ENCODE measurements at regions of chr5 and their contacts with region 1.

Region 1: DNA sequence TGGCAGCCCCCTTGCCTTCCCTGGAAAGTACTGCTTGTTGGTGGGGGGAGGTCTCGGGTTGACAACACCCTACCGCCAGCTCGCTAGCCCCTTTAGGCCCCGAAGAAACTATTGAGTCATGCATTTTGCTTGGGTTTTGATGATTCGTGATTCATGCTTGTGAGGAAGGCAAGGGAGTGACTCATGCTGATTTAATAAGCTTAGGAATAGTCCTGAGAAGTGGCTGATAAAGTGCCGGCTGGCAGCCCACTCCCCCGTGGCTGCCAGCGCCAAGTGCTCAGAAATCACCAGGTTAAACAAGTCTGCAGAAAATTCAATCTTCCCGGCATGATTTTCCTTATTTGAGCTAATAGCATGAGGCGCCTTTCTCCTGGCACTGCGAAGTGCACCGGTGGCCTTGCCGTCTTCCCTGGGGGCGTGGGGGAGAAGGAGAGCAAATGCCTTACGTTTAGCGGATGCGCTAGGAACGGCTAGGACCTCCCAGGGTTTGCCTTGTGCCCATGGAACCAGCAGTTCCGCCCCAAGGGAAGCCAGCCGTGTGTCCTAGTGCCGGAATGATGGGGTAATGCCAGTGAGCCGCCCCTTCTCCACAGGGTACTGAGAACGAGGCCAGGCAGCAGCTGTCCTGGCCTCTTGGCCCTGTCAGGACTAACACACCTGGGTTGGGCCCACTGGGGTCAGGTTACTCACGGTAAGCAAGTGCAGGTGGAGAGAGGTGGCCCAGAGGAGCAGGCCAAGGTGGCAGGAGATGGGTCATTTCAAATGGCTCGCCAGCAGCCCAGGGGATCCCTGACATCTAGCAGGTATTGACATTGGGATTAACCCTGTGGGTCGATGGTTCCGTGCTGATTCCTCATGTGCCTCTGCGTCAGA is 151.9 kb downstream of the MACROH2A1 start:
- DNase-seq: peak in 1 of 2 donors; percentile 75
- H3K4me3 ChIP-seq: peak overlapping the region in 1 of 2 donors; percentile 26
- H3K27ac ChIP-seq: peak overlapping the region; percentile 80 to 91
- H3K4me1 ChIP-seq: peaks cover 29 to 41% of the 10 kb centered on the region in 2 donors
- H3K27me3 ChIP-seq: no peaks in the 10 kb centered on the region
- CTCF ChIP-seq: no peak

Region 2: DNA sequence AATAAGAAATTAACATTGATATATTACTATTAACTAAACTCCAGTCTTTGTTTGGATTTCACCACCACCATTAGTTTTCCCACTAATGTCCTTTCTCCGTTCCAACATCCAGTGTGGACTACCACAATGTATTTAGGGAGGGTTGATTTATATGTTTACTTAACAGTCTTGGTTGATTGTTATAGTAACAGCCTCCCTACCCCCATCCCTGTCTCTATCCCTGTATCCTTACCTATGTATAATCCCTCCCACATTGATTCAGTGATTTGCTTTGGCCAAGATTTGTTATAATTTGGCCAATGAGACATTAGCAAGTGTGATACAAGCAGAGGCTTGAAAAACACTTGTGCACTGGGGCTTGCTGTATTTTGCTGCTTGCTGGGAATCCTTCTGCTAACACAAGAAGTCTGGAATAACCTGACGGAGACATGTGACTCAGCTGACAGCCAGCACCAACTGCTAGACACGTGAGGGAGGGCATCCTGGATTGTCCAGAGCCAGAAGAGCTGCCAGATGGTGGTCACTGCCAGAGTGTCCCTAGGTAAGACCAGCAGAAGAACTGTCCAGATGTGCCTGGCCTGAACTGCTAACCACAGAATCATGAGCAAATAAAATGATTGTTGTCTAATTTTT is 1183.9 kb before region 1 on chr5:
- intact Hi-C with region 1: no loop called
- DNase-seq: no peak
- H3K4me3 ChIP-seq: no peak overlapping the region
- H3K27ac ChIP-seq: no peak overlapping the region
- H3K4me1 ChIP-seq: peaks cover 3 to 12% of the 10 kb centered on the region in 2 donors
- H3K27me3 ChIP-seq: no peaks in the 10 kb centered on the region
- CTCF ChIP-seq: no peak

Region 3: GRCh38 chr5:135191084-135191826 is 55.9 kb before region 1 on chr5:
- intact Hi-C with region 1: loop called (anchors 1 kb)
- DNase-seq: peak in 1 of 2 donors; percentile 84
- H3K4me3 ChIP-seq: peak overlapping the region; percentile 66 to 71
- H3K27ac ChIP-seq: no peak overlapping the region
- H3K4me1 ChIP-seq: peaks cover 3 to 9% of the 10 kb centered on the region in 2 donors
- H3K27me3 ChIP-seq: no peaks in the 10 kb centered on the region
- CTCF ChIP-seq: peak; percentile 84 to 98 (median 93)

Region 4: DNA sequence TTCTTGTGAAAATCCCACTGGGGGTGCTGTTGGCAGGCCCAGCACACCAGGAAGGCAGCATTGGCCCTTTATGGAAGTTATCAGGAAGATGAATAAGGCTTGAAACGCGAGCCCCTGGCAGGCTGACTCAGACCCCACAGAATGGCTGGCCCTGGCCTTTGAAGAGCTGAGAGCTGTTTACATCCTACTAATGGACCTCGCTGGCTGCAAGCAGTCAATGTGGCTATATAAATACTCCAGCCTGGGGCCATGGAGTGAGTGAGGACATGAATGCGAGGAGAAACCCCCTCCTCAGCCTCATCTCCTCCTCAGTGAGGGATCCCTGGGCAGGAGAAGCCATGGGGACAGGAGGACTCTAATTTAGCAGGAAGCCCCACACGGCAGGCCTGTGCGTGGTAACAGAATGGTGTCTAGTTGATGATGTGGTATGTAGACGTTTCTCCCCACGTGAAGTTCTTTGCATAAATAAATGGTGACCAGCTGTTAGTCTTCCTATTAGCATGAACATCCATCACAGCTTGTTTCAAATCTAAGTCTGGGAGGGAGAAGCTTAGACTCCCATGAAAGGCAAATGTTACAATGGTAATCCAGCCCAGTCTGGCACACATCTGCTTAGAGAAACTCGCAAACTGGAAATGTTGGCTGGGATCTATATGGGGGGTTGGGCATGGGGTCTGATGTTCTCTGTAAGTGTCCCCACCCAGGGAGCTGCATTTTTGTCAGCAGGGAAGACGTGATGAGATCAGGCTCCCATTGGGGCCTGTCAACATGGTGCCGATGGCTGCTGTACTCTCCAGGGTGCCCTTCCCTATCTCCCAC is 38.0 kb before region 1 on chr5:
- intact Hi-C with region 1: loop called (anchors 1 kb)
- DNase-seq: peak; percentile 67 to 92
- H3K4me3 ChIP-seq: no peak overlapping the region
- H3K27ac ChIP-seq: peak overlapping the region; percentile 72 to 84
- H3K4me1 ChIP-seq: peaks cover 11 to 33% of the 10 kb centered on the region in 2 donors
- H3K27me3 ChIP-seq: no peaks in the 10 kb centered on the region
- CTCF ChIP-seq: peak in 1 of 3 experiments; percentile 30

Region 5: DNA sequence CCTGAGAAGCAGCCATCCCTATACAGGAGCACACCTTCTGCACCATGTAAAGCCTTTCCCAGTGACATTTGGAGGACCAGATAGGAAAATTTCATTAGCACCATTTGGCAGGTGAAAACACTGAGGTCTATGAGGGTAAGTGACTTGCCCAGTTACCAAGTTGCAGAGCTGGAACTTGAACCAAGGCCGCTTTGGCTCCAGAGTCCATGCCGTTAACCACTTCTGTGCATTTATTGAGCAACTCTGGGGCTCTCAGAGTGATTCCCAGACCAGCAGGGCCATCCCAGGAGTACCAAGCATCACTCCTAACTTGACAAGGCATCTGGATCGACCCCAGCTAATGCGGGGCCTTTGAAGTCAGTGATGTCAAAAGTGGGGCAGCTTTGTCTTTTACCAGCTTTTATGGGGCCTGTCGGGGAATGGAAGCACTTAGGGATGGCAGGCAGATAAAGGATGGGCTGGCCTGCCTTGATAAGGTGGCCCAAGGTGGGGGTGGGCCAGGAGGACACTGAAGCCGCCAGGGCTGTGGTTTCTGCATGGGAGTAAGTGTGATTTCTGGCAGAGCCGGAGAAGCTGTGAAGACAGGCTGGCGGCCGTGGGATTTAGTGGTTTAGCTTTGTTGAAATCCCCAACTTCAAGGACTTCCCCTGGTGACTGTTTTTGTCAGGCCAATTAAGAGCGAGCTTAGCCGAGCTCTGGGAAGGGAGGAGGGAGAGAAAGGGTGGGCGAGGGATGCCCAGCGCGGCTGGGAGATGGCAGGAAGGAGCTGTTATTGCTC is 24.6 kb after region 1 on chr5:
- intact Hi-C with region 1: loop called (anchors 2 kb)
- DNase-seq: no peak
- H3K4me3 ChIP-seq: no peak overlapping the region
- H3K27ac ChIP-seq: no peak overlapping the region
- H3K4me1 ChIP-seq: peaks cover 6 to 12% of the 10 kb centered on the region in 2 donors
- H3K27me3 ChIP-seq: no peaks in the 10 kb centered on the region
- CTCF ChIP-seq: no peak

Region 6: DNA sequence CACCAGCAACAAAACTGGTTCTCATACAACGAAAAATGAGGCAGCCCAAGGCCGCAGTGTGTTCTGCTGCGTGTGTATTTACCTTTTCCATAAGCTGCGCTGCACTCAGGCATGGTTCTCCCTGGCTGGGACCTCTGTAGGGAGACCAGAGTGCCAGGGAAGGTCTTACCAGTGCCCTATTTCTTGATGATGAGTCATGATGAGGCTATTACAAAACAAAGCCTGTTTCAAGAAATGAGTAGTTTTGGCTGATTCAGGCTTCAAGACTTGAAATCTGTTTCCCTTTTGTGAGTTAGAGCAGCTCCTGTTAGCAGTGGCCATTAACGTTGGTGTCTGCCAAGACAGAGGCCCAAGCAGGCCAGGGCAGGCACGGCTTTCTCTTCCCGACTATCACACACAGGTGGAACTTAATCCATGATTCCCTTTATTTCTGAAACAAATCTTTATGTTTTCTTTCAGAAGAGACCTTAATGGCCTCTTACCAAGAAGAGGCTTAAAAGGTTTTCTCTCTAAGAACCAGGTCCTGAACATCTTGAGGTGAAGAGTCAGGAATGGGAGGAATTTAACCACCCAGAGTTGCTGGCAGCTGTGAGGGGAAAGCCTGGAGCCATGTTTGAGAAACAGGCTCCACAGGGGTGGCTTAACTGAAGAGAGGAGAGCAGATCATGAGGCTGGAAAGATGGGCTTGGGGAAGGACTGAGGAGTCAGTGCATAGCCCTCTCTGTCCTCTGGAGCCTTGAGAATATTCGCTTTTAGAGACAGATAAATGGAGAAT is 246.4 kb after region 1 on chr5:
- intact Hi-C with region 1: loop called (anchors 10 kb)
- DNase-seq: peak in 1 of 2 donors; percentile 69
- H3K4me3 ChIP-seq: no peak overlapping the region
- H3K27ac ChIP-seq: peak overlapping the region; percentile 71 to 79
- H3K4me1 ChIP-seq: peaks cover 0 to 18% of the 10 kb centered on the region in 2 donors
- H3K27me3 ChIP-seq: no peaks in the 10 kb centered on the region
- CTCF ChIP-seq: no peak

Measured in ascending aorta (tissue), 2 donors.